ENCODE measurements at regions of chr20 and their contacts with region 1.

Region 1: GRCh38 chr20:17898548-17898994 is 70.0 kb downstream of the SNX5 start:
- DNase-seq: peak; percentile 70 to 81 (median 78)
- ATAC-seq: peak in 3 of 4 donors; percentile 36 to 60 (median 51)
- H3K4me3 ChIP-seq: no peak overlapping the region
- H3K27ac ChIP-seq: no peak overlapping the region
- H3K4me1 ChIP-seq: peaks cover 0 to 38% (median 31%) of the 10 kb centered on the region in 12 donors
- H3K27me3 ChIP-seq: no peaks in the 10 kb centered on the region
- CTCF ChIP-seq: peak; percentile 88 to 98 (median 92)
- POLR2A ChIP-seq: no peak

Region 2: DNA sequence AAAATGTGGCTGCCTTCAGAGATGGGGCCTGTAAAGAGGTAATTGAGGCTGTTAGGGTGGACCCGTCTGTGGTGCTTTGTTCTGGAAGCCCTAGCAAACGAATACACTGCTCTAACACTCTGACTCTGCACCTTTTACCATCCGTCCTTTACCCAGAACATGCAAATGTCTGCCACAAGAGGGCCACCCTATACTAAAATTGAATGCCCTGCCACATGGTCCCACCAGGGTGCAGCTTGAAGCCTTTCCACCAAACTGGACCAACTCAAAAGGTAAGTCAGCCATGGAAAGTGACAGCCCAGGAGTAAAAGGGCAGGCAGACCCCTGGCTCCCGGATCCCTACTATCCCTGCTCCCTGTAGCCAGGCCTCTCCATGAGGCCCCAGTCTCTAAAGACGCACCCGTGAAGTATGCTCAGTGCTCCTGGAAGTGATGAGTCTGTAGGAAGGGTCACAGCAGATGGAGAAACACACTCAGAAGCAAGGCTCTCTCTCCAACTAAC is 361.6 kb before region 1 on chr20:
- intact Hi-C with region 1: loop called in 8 of 10 experiments (anchors 2 to 10 kb)
- DNase-seq: peak in 4 of 5 donors; percentile 54 to 75 (median 69)
- ATAC-seq: peak; percentile 93 to 99 (median 98)
- H3K4me3 ChIP-seq: no peak overlapping the region
- H3K27ac ChIP-seq: peak overlapping the region in 2 of 12 donors; percentile 7 to 64
- H3K4me1 ChIP-seq: peaks cover 0 to 11% (median 0%) of the 10 kb centered on the region in 12 donors
- H3K27me3 ChIP-seq: no peaks in the 10 kb centered on the region
- CTCF ChIP-seq: peak; percentile 72 to 93 (median 88)
- POLR2A ChIP-seq: no peak

Region 3: DNA sequence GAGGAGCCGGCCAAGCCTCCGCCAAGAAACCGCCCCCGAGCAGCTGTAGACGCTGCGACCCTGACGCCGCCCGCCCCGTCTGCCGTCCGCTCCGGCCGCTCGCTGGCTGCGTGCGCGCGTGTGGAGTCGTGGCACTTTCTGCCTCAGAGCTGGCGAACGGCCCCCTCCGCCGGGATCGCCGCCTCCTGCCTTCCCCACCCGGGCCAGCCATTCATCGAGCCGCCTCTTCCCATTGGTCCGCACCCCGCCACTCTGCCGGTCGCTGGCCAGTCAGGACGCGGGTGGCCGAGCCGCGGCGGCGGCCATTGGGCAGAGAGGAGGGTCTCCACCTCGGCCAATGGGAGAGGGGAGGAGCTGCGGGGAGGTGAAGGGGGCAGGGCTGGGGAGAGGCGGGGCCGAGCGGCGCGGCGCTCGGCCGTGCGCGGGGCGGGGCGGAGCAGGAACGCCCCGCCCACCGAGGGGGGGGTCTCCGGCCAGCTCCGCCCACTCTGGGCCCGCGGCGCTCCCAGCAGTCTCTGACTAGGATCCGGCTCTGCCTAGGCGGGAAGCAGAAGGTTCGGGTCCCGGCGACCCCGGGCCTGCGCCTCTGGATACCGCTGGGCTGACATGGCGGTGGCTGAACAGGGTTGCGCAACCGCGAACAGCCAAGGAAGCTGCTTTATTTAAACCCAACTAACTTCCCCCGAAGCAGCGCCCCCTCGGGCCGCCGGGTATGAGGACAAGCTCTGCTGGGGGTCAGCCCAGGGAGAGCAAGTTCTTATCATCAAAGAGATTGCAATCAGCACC is 216.3 kb before region 1 on chr20 and contains the start of gene RRBP1:
- intact Hi-C with region 1: loop called (anchors 1 to 5 kb)
- DNase-seq: peak; percentile 99
- ATAC-seq: peak; percentile 97 to 99 (median 98)
- H3K4me3 ChIP-seq: peak within 1 kb of the TSS; percentile 64 to 95 (median 85)
- H3K27ac ChIP-seq: peak within 1 kb of the TSS; percentile 81 to 95 (median 92)
- H3K4me1 ChIP-seq: peaks cover 0 to 36% (median 17%) of the 10 kb centered on the region in 12 donors
- H3K27me3 ChIP-seq: no peaks in the 10 kb centered on the region
- CTCF ChIP-seq: peak; percentile 43 to 80 (median 68)
- POLR2A ChIP-seq: peak in 1 of 2 donors; percentile 95
- total RNA-seq, gene RRBP1: 27.9 to 91.3 (median 40.0) TPM

Region 4: GRCh38 chr20:17806739-17807441 is 91.7 kb before region 1 on chr20:
- intact Hi-C with region 1: loop called in 4 of 10 experiments (anchors 5 to 10 kb)
- DNase-seq: peak; percentile 85 to 90 (median 89)
- ATAC-seq: peak; percentile 88 to 94 (median 93)
- H3K4me3 ChIP-seq: peak overlapping the region in 6 of 12 donors; percentile 4 to 29 (median 17)
- H3K27ac ChIP-seq: peak overlapping the region; percentile 11 to 84 (median 76)
- H3K4me1 ChIP-seq: peaks cover 5 to 47% (median 37%) of the 10 kb centered on the region in 12 donors
- H3K27me3 ChIP-seq: no peaks in the 10 kb centered on the region
- CTCF ChIP-seq: peak in 1 of 12 donors; percentile 11
- POLR2A ChIP-seq: no peak

Region 5: GRCh38 chr20:17849901-17850683 is 48.5 kb before region 1 on chr20:
- intact Hi-C with region 1: loop called in 1 of 10 experiments (anchors 5 kb)
- DNase-seq: peak; percentile 67 to 87 (median 77)
- ATAC-seq: peak; percentile 72 to 85 (median 83)
- H3K4me3 ChIP-seq: no peak overlapping the region
- H3K27ac ChIP-seq: peak overlapping the region in 10 of 12 donors; percentile 54 to 87 (median 68)
- H3K4me1 ChIP-seq: peaks cover 0 to 33% (median 20%) of the 10 kb centered on the region in 12 donors
- H3K27me3 ChIP-seq: no peaks in the 10 kb centered on the region
- CTCF ChIP-seq: no peak
- POLR2A ChIP-seq: no peak